Activated B cell treated with CpG ODN at 0.5 μM for 24 hours (primary cell): ENCODE measurements at regions of chr2 and their contacts with region 1.

Region 1: GRCh38 chr2:88055371-88056128 is at the start of gene KRCC1:
- DNase-seq: peak; percentile 88
- ATAC-seq: peak; percentile 95
- H3K4me3 Mint-ChIP-seq: peak within 1 kb of the TSS; percentile 92
- H3K27ac Mint-ChIP-seq: peak within 1 kb of the TSS; percentile 96
- H3K4me1 Mint-ChIP-seq: peaks cover 39% of the 10 kb centered on the region
- H3K27me3 Mint-ChIP-seq: no peaks in the 10 kb centered on the region
- CTCF ChIP-seq: no peak
- total RNA-seq, gene KRCC1: 19.0 and 20.8 TPM in 2 replicates

Region 2: GRCh38 chr2:86562922-86563649 is 1492.5 kb before region 1 on chr2 and contains the start of gene CHMP3:
- CTCF ChIA-PET with region 1: no interaction called
- POLR2A ChIA-PET with region 1: no interaction called
- intact Hi-C with region 1: loop called (anchors 5 kb)
- DNase-seq: peak; percentile 94
- ATAC-seq: peak; percentile 89
- H3K4me3 Mint-ChIP-seq: peak within 1 kb of the TSS; percentile 97
- H3K27ac Mint-ChIP-seq: peak within 1 kb of the TSS; percentile 98
- H3K4me1 Mint-ChIP-seq: peaks cover 38% of the 10 kb centered on the region
- H3K27me3 Mint-ChIP-seq: peaks cover under 1% of the 10 kb centered on the region
- CTCF ChIP-seq: no peak
- total RNA-seq, gene CHMP3: 61.4 and 66.9 TPM in 2 replicates

Region 3: DNA sequence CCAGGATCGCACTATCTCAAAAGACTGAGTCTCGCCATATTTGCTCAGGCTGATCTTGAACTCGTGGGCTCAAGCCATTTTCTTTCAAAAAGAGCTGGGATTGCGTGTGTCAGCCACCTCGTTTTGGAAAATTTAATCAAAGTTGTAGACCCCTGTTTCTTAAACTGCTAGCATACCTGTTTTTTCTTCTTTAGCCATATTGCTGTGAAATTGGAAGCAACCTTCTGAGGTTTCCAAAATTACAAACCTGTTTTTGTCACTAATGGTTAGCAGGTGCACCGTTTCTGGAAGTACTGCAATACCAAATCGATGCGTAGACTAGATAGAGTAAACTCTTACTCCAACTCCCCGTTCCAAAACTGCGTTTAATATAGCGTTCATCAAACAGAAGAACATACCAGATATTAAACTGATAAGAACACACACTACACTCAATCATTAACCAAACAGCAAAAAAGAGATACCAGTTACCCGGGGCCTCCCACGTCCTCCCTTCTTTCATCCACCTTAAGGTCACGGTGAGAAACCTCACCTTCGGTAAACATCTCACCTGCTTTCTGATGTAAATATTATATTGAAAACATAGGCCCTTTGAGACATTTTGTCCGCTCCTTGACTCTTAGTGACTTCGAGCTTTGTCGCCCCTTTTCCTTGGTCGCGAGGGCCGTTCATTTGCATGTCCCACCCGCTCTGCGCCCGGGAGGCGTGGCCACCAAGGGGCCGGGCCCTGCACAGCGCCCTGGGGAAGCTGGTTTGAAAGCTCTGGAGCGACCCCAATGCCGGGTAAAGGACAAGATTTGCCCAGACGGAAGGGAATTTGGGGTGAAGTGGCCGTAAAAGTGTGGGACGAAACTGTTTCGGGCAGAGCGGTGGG is 39.2 kb before region 1 on chr2 and contains the start of gene RNU2-63P:
- CTCF ChIA-PET with region 1: interaction called, 3 read pairs
- POLR2A ChIA-PET with region 1: interaction called, 40 read pairs
- intact Hi-C with region 1: loop called (anchors 2 kb)
- DNase-seq: peak; percentile 82
- ATAC-seq: peak; percentile 72
- H3K4me3 Mint-ChIP-seq: peak within 1 kb of the TSS; percentile 98
- H3K27ac Mint-ChIP-seq: peak within 1 kb of the TSS; percentile 100
- H3K4me1 Mint-ChIP-seq: peaks cover 31% of the 10 kb centered on the region
- H3K27me3 Mint-ChIP-seq: no peaks in the 10 kb centered on the region
- CTCF ChIP-seq: no peak
- total RNA-seq, gene RNU2-63P: 9.7 and 19.5 TPM in 2 replicates

Region 4: GRCh38 chr2:88127888-88128653 is 72.5 kb after region 1 on chr2 and contains the start of gene FABP1:
- CTCF ChIA-PET with region 1: no interaction called
- POLR2A ChIA-PET with region 1: no interaction called
- intact Hi-C with region 1: no loop called
- DNase-seq: no peak
- ATAC-seq: no peak
- H3K4me3 Mint-ChIP-seq: no peak within 1 kb of the TSS
- H3K27ac Mint-ChIP-seq: no peak within 1 kb of the TSS
- H3K4me1 Mint-ChIP-seq: no peaks in the 10 kb centered on the region
- H3K27me3 Mint-ChIP-seq: peaks cover 19% of the 10 kb centered on the region
- CTCF ChIP-seq: no peak
- total RNA-seq, gene FABP1: not detected in 2 replicates

Region 5: GRCh38 chr2:88159955-88160415 is 104.4 kb after region 1 on chr2:
- CTCF ChIA-PET with region 1: interaction called, 40 read pairs
- POLR2A ChIA-PET with region 1: no interaction called
- intact Hi-C with region 1: loop called (anchors 1 kb)
- DNase-seq: no peak
- ATAC-seq: peak; percentile 69
- H3K4me3 Mint-ChIP-seq: no peak overlapping the region
- H3K27ac Mint-ChIP-seq: no peak overlapping the region
- H3K4me1 Mint-ChIP-seq: peaks cover 2% of the 10 kb centered on the region
- H3K27me3 Mint-ChIP-seq: no peaks in the 10 kb centered on the region
- CTCF ChIP-seq: peak; percentile 26

Region 6: DNA sequence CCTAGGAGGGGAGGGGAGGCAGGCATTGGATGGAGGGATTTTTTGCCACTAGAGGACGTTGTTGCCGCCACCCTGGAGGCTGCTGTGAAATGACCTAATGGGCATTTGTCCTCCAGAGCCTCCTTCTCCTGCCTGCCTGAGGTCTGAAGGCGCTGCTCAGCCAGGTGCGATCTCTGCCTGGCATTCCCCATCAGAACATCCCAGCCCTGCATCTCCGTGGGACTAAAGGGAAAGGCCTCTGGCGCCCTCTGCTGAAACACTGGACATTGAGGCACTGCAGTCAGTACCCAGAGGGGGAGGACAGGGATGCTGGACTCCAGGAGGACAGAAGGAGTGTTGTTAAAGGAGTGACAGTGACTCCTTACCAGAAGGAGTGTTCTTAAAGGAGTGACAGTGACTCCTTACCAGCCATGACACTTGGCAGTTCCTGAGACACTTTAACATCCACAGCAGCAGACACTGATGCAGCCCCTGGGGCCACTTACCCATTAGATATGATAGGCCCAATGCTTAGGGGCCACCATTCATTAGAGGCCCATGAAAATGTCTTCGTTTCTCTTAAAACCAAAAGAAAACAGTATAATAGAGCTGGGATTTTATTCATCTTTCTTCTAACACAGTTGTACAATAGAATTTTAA is 131.6 kb after region 1 on chr2:
- CTCF ChIA-PET with region 1: interaction called, 5 read pairs
- POLR2A ChIA-PET with region 1: no interaction called
- intact Hi-C with region 1: loop called (anchors 1 kb)
- DNase-seq: no peak
- ATAC-seq: peak; percentile 50
- H3K4me3 Mint-ChIP-seq: no peak overlapping the region
- H3K27ac Mint-ChIP-seq: no peak overlapping the region
- H3K4me1 Mint-ChIP-seq: peaks cover 14% of the 10 kb centered on the region
- H3K27me3 Mint-ChIP-seq: peaks cover 17% of the 10 kb centered on the region
- CTCF ChIP-seq: no peak

Region 7: DNA sequence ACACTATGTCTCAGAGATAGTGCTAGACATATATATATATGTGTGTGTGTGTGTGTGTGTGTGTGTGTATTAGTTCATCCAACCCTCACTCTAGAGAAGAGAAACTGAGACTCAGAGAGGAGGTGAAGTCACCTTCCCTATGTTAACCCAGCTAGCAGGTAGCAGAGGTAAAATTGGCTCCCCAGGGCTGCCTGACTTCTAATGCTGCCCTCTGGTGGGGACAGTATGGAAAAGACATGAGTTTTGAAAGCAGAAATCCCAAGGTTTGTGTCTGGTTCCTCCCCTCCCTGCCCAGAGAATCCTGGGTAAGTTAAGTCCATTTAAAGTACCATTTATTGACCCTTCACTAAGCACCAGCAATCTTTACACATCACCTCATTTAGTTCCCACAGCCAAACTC is 252.3 kb after region 1 on chr2:
- CTCF ChIA-PET with region 1: interaction called, 3 read pairs
- POLR2A ChIA-PET with region 1: no interaction called
- intact Hi-C with region 1: loop called (anchors 10 kb)
- DNase-seq: no peak
- ATAC-seq: no peak
- H3K4me3 Mint-ChIP-seq: no peak overlapping the region
- H3K27ac Mint-ChIP-seq: no peak overlapping the region
- H3K4me1 Mint-ChIP-seq: no peaks in the 10 kb centered on the region
- H3K27me3 Mint-ChIP-seq: peaks cover 15% of the 10 kb centered on the region
- CTCF ChIP-seq: no peak

Region 8: DNA sequence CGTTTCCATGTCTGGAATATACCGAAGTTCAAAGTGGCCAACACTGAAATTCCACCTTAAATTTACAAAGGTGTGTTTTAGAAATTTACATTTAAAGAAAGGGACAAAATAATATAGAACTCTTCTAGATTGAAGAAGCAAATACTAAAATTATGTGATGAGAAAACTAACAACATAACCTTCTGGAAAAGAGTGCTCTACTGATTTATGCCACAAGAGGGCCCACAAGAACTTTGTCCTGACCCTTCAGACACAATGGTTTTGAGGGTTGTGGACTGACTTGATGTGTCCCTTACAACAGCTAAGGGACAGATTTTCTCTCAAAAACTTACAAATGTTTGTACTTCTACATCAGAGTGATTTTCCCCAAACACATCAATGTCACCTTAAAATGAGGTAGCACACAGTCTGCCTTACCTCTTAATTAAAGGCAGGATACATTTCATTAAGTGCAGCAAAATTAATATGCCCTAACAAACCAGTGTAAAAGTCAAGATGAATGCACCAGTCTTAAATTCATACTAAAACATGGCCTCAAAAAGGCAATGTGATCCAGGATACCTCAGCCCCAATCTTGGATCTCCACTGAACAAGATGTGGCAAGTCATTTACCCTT is 535.6 kb after region 1 on chr2:
- CTCF ChIA-PET with region 1: no interaction called
- POLR2A ChIA-PET with region 1: no interaction called
- intact Hi-C with region 1: no loop called
- DNase-seq: no peak
- ATAC-seq: peak; percentile 88
- H3K4me3 Mint-ChIP-seq: no peak overlapping the region
- H3K27ac Mint-ChIP-seq: peak overlapping the region; percentile 70
- H3K4me1 Mint-ChIP-seq: peaks cover 25% of the 10 kb centered on the region
- H3K27me3 Mint-ChIP-seq: no peaks in the 10 kb centered on the region
- CTCF ChIP-seq: peak; percentile 35